Left ventricle myocardium superior (tissue), 1 donor: ENCODE measurements at regions of chr15 and their contacts with region 1.

Region 1: GRCh38 chr15:51731549-51732267 is 5.7 kb downstream of the LYSMD2 start:
- DNase-seq: no peak
- ATAC-seq: peak; percentile 77

Region 2: DNA sequence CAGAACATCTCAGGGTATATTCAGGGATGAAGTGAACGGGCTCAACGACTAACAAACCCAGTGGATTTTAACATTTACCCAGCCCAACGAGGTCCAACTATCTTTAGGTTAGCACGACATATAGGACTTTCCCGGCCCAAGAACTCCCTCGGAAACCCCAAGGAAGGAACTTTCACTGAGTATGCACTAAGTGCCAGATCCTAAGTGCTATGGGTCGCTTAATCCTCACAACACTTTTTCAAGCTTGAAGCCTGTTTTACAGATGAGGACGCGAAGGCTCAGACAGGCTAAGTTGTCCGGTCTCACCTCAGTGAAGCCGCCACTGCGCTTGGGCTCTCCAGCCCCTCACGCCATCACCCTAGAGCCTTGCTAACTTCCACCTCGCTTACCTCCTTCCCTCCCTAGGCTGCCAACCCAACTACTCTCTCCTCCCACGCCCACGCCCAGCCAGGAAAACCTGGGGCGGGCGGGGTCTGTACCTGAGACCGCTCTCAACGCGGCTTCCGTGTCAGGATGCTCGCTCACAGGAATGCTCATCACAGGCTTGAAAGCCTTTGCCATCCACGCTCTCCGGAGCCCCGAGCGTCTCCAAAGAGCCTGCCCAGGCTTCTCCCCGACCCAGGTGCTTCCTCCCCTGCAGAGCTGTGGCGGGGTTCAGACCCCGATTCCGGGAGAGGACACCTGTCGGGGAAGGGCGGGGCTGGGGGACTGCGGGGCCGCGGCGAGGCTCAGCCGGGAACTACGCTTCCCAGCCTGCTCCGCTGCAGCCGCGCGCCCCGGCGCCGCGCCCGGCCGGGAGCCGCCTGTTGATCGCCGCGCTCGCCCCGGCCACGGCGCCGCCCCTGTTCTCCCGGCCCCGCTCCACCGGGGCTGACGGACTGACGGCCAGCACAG is 19.3 kb after region 1 on chr15 and contains the start of gene TMOD2:
- intact Hi-C with region 1: loop called (anchors 2 kb)
- DNase-seq: peak; percentile 79
- ATAC-seq: peak; percentile 98
- total RNA-seq, gene TMOD2: 9.2 TPM